BJ (cell line): ENCODE measurements at regions of chr16 and their contacts with region 1.

Region 1: DNA sequence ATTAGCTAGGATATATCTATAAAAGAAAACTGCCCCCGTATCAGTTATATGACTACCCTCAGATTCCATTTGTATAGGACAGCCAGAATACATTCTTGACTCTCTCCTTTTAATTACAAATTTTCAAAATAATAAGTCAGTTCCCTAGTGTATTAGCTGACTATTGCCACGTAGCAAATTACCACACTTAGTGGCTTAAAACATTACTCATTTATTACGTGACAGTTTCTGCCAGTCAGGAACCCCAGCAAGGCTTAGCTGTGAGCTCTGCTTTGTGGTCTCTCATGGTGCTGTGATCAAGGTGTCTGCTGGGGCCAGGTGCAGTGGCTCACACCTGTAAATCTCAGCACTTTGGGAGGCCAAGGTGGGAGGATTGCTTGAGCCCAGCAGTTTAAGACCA is 13.9 kb upstream of the SCNN1B start:
- DNase-seq: no peak
- H3K4me3 ChIP-seq: no peak overlapping the region
- H3K27me3 ChIP-seq: no peaks in the 10 kb centered on the region
- CTCF ChIP-seq: no peak

Region 2: DNA sequence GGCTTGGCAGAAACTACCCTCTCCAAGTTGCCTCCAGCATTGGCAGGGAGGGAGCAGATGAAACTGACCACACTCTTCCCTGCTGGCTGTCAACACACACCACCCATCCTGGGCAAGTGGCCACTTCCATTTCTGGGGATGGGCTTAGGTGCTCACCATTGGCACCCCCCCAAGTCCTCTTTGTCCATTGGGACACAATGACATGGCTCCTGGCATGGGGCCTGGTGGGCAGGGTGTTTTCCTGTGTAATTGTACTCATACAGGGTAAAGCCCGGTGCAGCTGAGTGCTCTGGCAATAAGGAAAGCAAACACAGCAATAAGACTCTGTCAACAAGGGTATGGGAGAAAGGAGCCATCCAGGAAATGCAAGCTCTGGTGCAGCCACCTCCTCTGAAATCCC is 36.5 kb after region 1 on chr16:
- CTCF ChIA-PET with region 1: no interaction called
- POLR2A ChIA-PET with region 1: interaction called, 12 read pairs
- DNase-seq: no peak
- H3K4me3 ChIP-seq: no peak overlapping the region
- H3K27me3 ChIP-seq: no peaks in the 10 kb centered on the region
- CTCF ChIP-seq: no peak